Activated naive CD4-positive, alpha-beta T cell treated with anti-CD3 and anti-CD28 coated beads for 36 hours (primary cell): ENCODE measurements at regions of chr18 and their contacts with region 1.

Region 1: GRCh38 chr18:35267161-35267651 is 22.8 kb downstream of the ZSCAN30 start:
- DNase-seq: peak; percentile 62
- H3K4me3 Mint-ChIP-seq: peak overlapping the region; percentile 79
- H3K27ac Mint-ChIP-seq: peak overlapping the region; percentile 82
- H3K4me1 Mint-ChIP-seq: peaks cover 22% of the 10 kb centered on the region
- H3K27me3 Mint-ChIP-seq: no peaks in the 10 kb centered on the region

Region 2: GRCh38 chr18:35240664-35241447 is 26.4 kb before region 1 on chr18 and contains the start of gene ZNF397:
- CTCF ChIA-PET with region 1: no interaction called
- intact Hi-C with region 1: loop called (anchors 1 kb)
- DNase-seq: peak; percentile 98
- H3K4me3 Mint-ChIP-seq: peak within 1 kb of the TSS; percentile 94
- H3K27ac Mint-ChIP-seq: peak within 1 kb of the TSS; percentile 99
- H3K4me1 Mint-ChIP-seq: peaks cover 38% of the 10 kb centered on the region
- H3K27me3 Mint-ChIP-seq: no peaks in the 10 kb centered on the region
- total RNA-seq, gene ZNF397: 22.6 to 23.2 TPM

Region 3: DNA sequence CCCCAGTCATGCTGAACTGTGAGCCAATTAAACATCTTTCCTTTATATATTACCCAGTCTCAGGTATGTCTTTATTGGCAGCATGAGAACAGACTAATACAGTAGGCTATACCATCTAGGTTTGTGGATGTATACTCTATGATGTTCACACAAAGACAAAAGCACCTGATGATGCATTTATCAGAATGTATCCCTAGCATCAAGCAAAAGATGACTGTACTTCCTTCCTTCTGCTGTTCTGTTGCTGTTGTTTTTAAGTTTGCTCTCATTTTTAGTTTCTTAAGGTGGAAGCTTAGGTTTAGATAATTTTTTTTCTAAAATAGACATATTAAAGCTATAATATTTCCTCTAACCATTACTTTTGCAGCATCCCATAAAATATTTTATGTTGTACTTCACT is 10.4 kb after region 1 on chr18:
- CTCF ChIA-PET with region 1: no interaction called
- intact Hi-C with region 1: loop called (anchors 1 kb)
- DNase-seq: no peak
- H3K4me3 Mint-ChIP-seq: no peak overlapping the region
- H3K27ac Mint-ChIP-seq: no peak overlapping the region
- H3K4me1 Mint-ChIP-seq: peaks cover 13% of the 10 kb centered on the region
- H3K27me3 Mint-ChIP-seq: no peaks in the 10 kb centered on the region

Region 4: GRCh38 chr18:35290073-35290735 is 23.0 kb after region 1 on chr18 and contains the start of gene ZSCAN30:
- CTCF ChIA-PET with region 1: interaction called, 4 read pairs
- intact Hi-C with region 1: loop called (anchors 1 kb)
- DNase-seq: peak; percentile 96
- H3K4me3 Mint-ChIP-seq: peak within 1 kb of the TSS; percentile 96
- H3K27ac Mint-ChIP-seq: peak within 1 kb of the TSS; percentile 97
- H3K4me1 Mint-ChIP-seq: peaks cover 48% of the 10 kb centered on the region
- H3K27me3 Mint-ChIP-seq: peaks cover 2% of the 10 kb centered on the region
- total RNA-seq, gene ZSCAN30: 12.0 to 14.3 TPM

Region 5: DNA sequence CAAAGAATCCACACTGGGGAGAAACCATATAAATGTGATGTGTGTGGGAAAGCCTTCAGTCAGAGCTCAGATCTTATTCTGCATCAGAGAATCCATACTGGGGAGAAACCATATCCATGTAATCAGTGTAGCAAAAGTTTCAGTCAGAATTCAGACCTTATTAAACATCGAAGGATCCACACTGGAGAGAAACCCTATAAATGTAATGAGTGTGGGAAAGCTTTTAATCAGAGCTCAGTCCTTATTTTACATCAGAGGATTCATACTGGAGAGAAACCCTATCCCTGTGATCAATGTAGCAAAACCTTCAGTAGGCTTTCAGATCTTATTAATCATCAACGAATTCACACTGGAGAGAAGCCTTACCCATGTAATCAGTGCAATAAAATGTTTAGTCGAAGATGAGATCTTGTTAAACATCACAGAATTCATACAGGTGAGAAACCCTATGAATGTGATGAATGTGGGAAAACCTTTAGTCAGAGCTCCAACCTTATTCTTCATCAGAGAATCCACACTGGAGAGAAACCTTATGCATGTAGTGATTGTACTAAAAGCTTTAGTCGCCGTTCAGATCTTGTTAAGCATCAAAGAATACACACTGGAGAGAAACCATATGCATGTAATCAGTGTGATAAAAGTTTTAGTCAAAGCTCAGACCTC is 39.5 kb after region 1 on chr18:
- CTCF ChIA-PET with region 1: no interaction called
- intact Hi-C with region 1: loop called (anchors 5 kb)
- DNase-seq: no peak
- H3K4me3 Mint-ChIP-seq: no peak overlapping the region
- H3K27ac Mint-ChIP-seq: no peak overlapping the region
- H3K4me1 Mint-ChIP-seq: no peaks in the 10 kb centered on the region
- H3K27me3 Mint-ChIP-seq: no peaks in the 10 kb centered on the region

Region 6: DNA sequence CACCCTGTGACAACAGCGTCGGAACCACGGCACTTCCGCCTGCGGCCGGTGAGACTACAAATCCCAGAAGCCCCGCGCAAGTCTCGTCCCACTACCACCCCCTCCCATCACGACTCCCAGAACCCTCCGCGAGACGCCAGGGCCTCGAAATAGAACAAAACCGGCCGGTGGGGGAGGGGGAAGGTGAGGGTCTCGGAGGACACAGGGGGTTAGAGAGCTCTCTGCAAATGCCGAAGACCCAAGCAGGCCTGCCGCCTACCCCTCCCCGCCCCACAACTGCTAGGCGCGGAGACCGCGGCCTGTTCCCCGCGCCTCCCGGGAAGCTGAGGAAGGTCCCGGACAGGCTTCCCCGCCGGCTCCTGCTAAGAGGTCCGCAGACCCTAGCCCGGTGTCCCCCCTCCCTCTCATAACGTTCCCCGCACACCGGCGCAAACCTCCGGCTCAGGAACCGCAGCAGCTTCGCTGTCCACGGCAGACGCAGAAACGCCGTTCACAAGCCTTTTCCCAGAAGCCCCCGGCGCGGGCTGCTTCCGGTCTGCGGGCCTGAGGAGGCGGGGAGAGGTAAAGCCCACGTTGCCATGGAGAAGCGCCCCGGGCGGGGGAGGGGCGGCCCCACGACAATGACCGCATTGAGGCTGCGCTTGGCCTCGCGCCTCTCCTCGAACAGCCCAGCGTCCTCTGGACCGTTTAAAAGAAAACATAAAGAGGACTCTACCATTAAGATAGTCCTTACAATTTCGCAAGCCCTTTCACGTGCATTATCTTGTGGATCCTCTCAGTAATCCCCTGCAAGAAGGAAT is 76.9 kb after region 1 on chr18 and contains the start of gene ZNF24:
- CTCF ChIA-PET with region 1: interaction called, 4 read pairs
- intact Hi-C with region 1: loop called (anchors 1 kb)
- DNase-seq: peak; percentile 94
- H3K4me3 Mint-ChIP-seq: peak within 1 kb of the TSS; percentile 92
- H3K27ac Mint-ChIP-seq: peak within 1 kb of the TSS; percentile 92
- H3K4me1 Mint-ChIP-seq: peaks cover 43% of the 10 kb centered on the region
- H3K27me3 Mint-ChIP-seq: no peaks in the 10 kb centered on the region
- total RNA-seq, gene ZNF24: 46.8 to 47.8 TPM